ENCODE measurements at regions of chr10 and their contacts with region 1.

Region 1: DNA sequence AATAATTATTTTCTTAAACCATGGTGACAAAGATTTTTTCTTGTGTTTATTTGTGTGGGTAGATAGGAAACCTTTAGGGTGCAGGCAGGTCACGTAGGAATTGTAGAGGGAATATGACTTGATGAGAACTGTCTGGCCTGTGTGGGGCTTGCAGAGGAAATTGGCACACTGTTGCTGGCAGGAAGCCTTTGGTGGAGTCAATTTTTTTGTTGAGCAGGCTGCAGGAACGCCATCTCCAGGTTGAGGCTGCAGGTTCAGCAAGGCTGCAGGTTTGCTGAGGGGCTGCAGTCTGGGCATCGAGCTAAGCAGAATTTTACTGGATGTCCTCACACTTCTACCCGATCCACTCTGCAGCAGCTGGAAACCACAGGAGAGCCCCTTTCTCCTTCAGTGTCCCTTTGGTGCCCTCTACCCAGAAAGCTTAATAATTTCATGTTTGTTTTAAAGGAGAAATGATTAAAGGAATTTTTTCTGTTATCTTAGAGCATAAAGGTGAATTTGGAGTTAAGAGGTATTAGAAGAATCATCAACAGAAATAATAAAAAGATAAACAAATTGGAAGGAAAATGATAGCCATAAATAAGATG is 37.0 kb downstream of the TBC1D12 start:
- DNase-seq: no peak
- ATAC-seq: no peak
- H3K4me3 Mint-ChIP-seq: no peak overlapping the region
- H3K27ac Mint-ChIP-seq: no peak overlapping the region
- H3K4me1 Mint-ChIP-seq: no peaks in the 10 kb centered on the region
- H3K27me3 Mint-ChIP-seq: peaks cover 9% of the 10 kb centered on the region
- CTCF ChIP-seq: no peak

Region 2: DNA sequence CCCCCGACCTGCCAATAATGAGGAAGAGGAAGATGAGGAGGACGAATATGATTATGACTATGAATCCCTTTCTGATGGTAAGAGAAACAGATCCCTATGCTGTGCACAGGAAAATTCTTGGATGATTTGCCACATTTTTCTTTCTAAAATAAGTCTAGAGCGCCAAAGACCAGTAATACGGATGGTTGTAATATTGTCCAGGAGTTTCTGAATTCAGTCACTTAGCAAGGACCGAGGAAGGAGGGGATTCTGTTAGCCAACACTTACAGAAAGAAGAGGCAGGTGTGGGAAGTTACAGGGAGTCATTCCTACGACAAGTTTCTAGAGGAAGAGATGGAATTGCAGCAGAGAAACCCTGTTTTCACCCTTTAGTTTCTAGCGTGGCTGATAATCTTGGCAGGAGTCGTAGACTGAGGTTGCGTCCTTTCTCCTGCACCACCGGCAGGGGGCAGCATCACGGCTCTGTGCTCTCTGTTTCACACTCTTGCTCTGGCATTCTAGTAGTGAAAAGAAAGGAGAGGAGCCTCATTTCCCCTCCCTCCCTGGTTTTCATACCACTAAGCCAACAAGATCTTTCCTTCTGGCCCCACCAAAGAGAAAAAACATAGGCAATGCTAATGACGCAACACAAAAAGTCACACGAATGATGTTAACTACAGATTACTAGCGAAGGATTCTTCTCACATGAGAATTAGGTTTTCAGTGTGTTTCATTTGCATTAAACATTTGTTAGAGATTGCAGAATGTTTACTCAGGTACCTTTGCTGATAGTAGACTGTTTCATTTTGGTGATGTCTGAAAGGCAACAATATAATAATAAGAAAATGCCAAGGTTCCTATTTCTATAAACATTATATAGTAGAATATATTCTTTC is 159.3 kb before region 1 on chr10:
- CTCF ChIA-PET with region 1: interaction called, 11 read pairs
- POLR2A ChIA-PET with region 1: no interaction called
- intact Hi-C with region 1: loop called (anchors 2 kb)
- DNase-seq: peak; percentile 57
- ATAC-seq: peak; percentile 68
- H3K4me3 Mint-ChIP-seq: no peak overlapping the region
- H3K27ac Mint-ChIP-seq: no peak overlapping the region
- H3K4me1 Mint-ChIP-seq: peaks cover 2% of the 10 kb centered on the region
- H3K27me3 Mint-ChIP-seq: peaks cover 16% of the 10 kb centered on the region
- CTCF ChIP-seq: peak; percentile 90

Region 3: GRCh38 chr10:94362360-94363250 is 76.8 kb before region 1 on chr10 and contains the start of gene NOC3L:
- CTCF ChIA-PET with region 1: interaction called, 4 read pairs
- POLR2A ChIA-PET with region 1: no interaction called
- intact Hi-C with region 1: loop called (anchors 10 kb)
- DNase-seq: peak; percentile 97
- ATAC-seq: peak; percentile 99
- H3K4me3 Mint-ChIP-seq: peak within 1 kb of the TSS; percentile 89
- H3K27ac Mint-ChIP-seq: peak within 1 kb of the TSS; percentile 91
- H3K4me1 Mint-ChIP-seq: peaks cover 36% of the 10 kb centered on the region
- H3K27me3 Mint-ChIP-seq: peaks cover 3% of the 10 kb centered on the region
- CTCF ChIP-seq: peak; percentile 26
- total RNA-seq, gene NOC3L: 45.5 to 46.6 TPM

Region 4: DNA sequence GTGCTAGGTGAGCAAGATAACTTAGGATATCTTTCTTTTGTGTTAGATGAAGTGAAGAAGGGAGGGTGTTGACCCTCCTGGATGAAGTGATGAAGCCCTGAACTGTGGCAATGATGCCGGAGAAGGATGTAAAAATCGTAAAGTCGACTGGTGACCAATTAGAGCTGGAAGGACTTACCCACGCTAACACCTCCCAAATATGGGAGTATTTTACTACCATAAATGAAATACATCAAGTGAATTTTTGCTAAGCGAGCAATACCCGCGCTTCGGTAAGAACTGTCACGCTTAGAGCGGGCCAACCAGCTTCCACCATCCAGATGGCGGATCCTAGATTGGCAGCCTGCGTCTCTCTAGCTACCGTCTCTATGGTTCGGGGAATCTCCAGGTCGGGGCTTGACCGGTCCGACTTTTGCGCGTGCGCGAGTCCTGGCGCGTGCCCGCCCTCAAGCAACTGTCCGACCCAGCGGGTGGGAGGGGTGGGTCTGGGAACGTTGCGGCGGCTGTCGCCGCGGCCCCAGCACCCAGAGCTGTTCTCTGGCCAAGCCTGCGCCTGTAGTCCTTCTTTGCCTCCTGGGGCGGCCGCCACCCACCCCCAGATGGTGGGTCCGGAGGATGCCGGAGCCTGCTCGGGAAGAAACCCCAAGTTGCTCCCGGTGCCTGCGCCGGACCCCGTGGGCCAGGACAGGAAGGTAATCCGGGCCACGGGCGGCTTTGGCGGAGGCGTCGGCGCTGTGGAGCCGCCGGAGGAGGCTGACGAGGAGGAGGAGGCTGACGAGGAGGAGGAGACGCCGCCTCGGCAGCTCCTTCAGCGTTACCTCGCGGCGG is 37.1 kb before region 1 on chr10 and contains the start of gene TBC1D12:
- CTCF ChIA-PET with region 1: interaction called, 14 read pairs
- POLR2A ChIA-PET with region 1: no interaction called
- intact Hi-C with region 1: no loop called
- DNase-seq: peak; percentile 38
- ATAC-seq: peak; percentile 76
- H3K4me3 Mint-ChIP-seq: peak within 1 kb of the TSS; percentile 59
- H3K27ac Mint-ChIP-seq: no peak within 1 kb of the TSS
- H3K4me1 Mint-ChIP-seq: peaks cover 5% of the 10 kb centered on the region
- H3K27me3 Mint-ChIP-seq: peaks cover 45% of the 10 kb centered on the region
- CTCF ChIP-seq: no peak
- total RNA-seq, gene TBC1D12: 0.20 TPM

Region 5: DNA sequence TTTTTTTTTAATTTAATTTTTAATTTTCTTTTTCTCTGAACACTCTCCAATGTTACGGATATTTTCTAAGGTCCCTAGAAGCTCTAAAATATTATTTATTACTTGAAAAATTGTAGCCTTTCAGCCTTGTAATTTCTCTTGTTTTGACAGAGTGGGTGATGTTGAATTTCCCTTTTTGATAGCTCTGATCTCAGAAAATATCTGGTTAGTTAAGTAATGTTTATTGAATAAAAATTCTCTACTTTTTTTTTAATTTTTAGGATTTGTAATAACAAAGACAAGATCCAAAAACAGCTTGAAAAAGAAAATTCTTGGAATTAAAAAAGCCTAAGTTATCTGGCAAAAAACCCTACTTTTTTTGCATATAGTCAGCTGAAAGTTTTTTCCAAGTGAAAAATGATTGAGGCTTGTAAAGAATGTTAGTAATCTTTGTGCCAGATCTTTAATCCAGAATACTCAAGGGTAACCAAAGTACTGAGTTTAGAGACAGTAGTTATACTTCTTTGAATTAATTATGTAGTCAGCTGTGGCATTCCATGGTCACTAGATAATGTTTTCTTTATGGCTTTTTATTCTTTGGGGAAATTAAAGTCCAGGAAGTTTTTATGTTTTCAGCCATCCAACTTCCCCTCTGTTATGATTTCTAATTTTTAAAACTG is 10.2 kb before region 1 on chr10:
- CTCF ChIA-PET with region 1: interaction called, 12 read pairs
- POLR2A ChIA-PET with region 1: no interaction called
- intact Hi-C with region 1: no loop called
- DNase-seq: no peak
- ATAC-seq: no peak
- H3K4me3 Mint-ChIP-seq: no peak overlapping the region
- H3K27ac Mint-ChIP-seq: no peak overlapping the region
- H3K4me1 Mint-ChIP-seq: no peaks in the 10 kb centered on the region
- H3K27me3 Mint-ChIP-seq: peaks cover 12% of the 10 kb centered on the region
- CTCF ChIP-seq: no peak

Region 6: GRCh38 chr10:94456942-94457341 is 17.6 kb after region 1 on chr10:
- CTCF ChIA-PET with region 1: interaction called, 11 read pairs
- POLR2A ChIA-PET with region 1: no interaction called
- intact Hi-C with region 1: no loop called
- DNase-seq: no peak
- ATAC-seq: no peak
- H3K4me3 Mint-ChIP-seq: no peak overlapping the region
- H3K27ac Mint-ChIP-seq: no peak overlapping the region
- H3K4me1 Mint-ChIP-seq: no peaks in the 10 kb centered on the region
- H3K27me3 Mint-ChIP-seq: peaks cover 12% of the 10 kb centered on the region
- CTCF ChIP-seq: no peak